ENCODE measurements at regions of chr7 and their contacts with region 1.

Region 1: DNA sequence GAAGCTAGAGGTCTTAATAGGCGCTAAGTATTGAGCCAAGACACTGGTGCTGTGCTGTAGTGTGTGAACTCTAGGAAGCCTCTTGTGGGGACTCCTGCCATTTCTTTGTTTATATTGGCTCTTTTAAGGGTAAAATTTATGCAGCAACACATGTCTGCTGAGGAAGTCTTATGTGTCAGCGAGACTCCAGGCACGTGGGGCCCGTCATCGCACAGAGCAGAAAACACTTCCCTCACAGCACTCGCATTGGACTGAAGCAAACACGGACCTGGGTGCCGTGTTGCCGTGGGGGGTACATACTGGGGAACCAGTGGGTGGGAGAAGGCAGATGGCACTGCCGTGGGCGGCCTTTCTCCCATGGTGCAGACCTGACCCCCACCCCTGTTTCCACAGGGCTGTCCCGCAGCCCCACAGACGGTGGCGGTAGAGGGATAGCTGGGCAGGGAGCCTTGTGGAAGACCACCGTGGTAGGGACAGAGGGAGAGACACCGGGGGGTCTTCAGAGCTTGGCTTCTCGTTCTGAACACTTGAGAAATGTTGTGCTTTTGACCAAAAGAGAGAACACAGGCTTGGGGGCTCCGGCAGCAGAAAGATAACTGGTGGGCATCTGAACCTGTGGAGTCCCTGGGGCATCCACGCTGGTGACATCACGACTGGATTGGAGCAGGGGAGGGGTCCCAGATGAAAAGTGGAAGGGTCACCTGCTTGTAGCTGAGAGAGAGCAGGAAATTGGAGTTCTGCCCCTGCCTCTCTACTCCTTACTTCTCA is 284.7 kb upstream of the SHH start:
- DNase-seq: peak in 5 of 9 donors; percentile 11 to 37 (median 22)
- ATAC-seq: peak; percentile 31
- H3K4me3 ChIP-seq: no peak overlapping the region
- H3K4me3 Mint-ChIP-seq: peak overlapping the region in 9 of 10 donors; percentile 5 to 79 (median 66)
- H3K27ac ChIP-seq: no peak overlapping the region
- H3K27ac Mint-ChIP-seq: peak overlapping the region in 8 of 9 donors; percentile 63 to 89 (median 80)
- H3K4me1 ChIP-seq: peaks cover 0 to 26% of the 10 kb centered on the region in 2 donors
- H3K4me1 Mint-ChIP-seq: peaks cover 0 to 34% (median 22%) of the 10 kb centered on the region in 7 donors
- H3K27me3 ChIP-seq: no peaks in the 10 kb centered on the region
- H3K27me3 Mint-ChIP-seq: peaks cover 0 to 4% (median 0%) of the 10 kb centered on the region in 5 donors

Region 2: DNA sequence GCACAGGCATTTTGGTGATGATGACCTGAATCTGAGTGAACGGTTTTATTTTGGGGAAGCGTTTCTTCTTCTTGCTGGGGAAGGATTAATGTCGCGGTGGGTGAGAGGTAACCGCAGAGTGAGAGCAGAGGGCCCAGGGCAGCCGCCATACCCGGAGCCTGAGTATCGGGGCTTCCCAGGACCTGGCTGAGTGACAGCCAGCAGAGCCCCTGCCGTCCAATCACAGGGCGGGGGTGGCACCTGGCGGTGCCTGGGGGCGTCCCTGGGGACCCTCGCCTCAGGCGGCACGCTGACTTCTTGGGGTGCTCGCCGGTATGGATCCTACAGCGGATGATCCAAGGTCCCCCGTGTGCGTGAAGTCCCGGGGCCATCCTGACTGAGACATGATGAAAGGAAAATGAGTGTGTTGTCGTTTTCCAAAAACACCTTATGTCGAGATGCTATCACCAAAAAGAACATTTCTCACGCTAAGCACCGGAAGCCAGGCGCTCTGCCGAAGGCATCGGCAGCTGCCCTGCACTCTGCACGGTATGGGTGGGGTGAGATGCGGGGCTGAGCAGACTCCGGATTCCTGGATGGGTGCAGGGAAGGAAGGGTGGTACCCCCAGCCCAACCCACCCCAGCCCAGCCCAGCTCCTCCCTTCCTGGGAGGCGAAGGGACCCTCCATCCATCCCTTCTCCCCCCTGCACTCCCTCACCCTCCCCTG is 56.8 kb before region 1 on chr7:
- CTCF ChIA-PET with region 1: no interaction called
- POLR2A ChIA-PET with region 1: no interaction called
- intact Hi-C with region 1: loop called in 1 of 2 experiments (anchors 2 kb)
- DNase-seq: peak in 2 of 9 donors; percentile 15 to 36
- ATAC-seq: peak; percentile 52
- H3K4me3 ChIP-seq: no peak overlapping the region
- H3K4me3 Mint-ChIP-seq: peak overlapping the region in 5 of 10 donors; percentile 38 to 77 (median 57)
- H3K27ac ChIP-seq: no peak overlapping the region
- H3K27ac Mint-ChIP-seq: no peak overlapping the region
- H3K4me1 ChIP-seq: no peaks in the 10 kb centered on the region
- H3K4me1 Mint-ChIP-seq: no peaks in the 10 kb centered on the region
- H3K27me3 ChIP-seq: no peaks in the 10 kb centered on the region
- H3K27me3 Mint-ChIP-seq: no peaks in the 10 kb centered on the region

Measured in naive thymus-derived CD4-positive, alpha-beta T cell (primary cell).